Gastrocnemius medialis (tissue), 4 donors: ENCODE measurements at regions of chr11 and their contacts with region 1.

Region 1: DNA sequence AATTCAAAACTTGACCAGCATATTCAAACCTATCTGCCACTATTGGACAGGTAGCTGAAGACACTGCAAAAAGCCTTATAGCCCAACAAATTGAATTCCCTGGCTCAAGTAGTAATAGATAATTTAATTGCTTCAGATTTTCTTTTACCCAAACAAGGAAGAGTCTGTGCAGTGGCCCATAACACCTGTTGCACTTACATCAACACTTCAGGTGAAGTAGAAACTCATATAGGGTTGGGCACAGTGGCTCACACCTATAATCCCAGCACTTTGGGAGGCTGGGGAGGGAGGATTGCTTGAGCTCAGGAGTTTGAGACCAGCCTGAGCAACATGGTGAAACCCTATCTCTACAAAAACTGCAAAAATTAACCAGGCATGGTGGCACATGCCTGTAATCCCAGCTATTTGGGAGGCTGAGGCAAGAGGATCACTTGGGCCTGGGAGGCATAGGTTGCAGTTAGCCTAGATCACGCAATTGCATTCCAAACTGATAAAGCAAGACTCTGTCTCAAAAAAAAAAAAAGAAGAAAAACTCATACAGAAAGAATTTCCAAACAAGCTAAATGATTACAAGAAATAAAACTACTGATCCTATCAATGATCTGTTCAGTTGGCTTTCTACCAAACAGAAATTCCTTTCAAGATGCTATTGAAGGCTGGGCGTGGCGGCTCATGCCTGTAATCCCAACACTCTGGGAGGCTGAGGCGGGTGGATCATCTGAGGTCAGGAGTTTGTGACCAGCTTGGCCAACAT is 9.5 kb downstream of the FOLR3 start:
- DNase-seq: no peak
- ATAC-seq: no peak
- H3K4me3 ChIP-seq: no peak overlapping the region
- H3K27ac ChIP-seq: no peak overlapping the region
- H3K4me1 ChIP-seq: no peaks in the 10 kb centered on the region
- H3K27me3 ChIP-seq: no peaks in the 10 kb centered on the region
- CTCF ChIP-seq: no peak
- POLR2A ChIP-seq: no peak

Region 2: DNA sequence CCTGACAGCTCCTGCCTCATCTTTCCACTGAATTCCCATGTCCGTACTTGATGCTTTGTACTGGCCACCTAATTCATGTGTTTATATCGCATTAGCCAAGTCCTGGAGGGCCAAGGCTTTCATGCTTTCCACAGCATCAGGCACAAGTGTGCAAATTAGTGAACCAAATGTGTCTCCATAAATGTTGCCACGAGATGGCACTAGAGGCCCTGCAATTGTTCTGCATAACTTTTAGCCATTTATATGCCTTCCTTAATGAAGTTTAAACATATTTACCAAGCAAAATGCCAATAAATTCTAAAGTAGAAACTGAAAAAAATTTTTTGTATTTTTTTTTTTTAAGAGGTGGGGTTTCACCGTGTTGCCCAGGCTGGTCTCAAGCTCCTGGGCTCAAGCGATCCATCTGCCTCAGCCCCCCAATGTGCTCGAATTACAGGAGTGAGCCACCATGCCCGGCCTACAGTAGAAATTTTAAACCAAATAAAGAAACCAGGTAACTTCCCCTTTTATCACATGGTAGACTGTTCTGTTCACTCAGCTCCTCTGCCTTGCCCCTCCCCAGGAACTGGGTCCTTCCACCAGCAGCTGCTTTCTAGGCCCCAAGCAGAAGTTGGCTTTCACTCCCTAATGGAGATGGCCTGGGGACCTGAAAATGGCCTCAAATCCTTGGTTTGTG is 167.1 kb before region 1 on chr11:
- in situ Hi-C with region 1: no loop called
- intact Hi-C with region 1: loop called (anchors 2 kb)
- DNase-seq: peak in 1 of 2 donors; percentile 45
- ATAC-seq: peak; percentile 54 to 79
- H3K4me3 ChIP-seq: no peak overlapping the region
- H3K27ac ChIP-seq: no peak overlapping the region
- H3K4me1 ChIP-seq: peaks cover 3 to 8% of the 10 kb centered on the region in 2 donors
- H3K27me3 ChIP-seq: no peaks in the 10 kb centered on the region
- CTCF ChIP-seq: peak; percentile 39 to 75 (median 69)
- POLR2A ChIP-seq: no peak

Region 3: GRCh38 chr11:72030472-72031045 is 114.4 kb before region 1 on chr11:
- in situ Hi-C with region 1: no loop called
- intact Hi-C with region 1: loop called (anchors 1 kb)
- DNase-seq: no peak
- ATAC-seq: no peak
- H3K4me3 ChIP-seq: no peak overlapping the region
- H3K27ac ChIP-seq: peak overlapping the region in 1 of 4 donors; percentile 35
- H3K4me1 ChIP-seq: peaks cover 26 to 62% of the 10 kb centered on the region in 2 donors
- H3K27me3 ChIP-seq: no peaks in the 10 kb centered on the region
- CTCF ChIP-seq: no peak
- POLR2A ChIP-seq: no peak

Region 4: DNA sequence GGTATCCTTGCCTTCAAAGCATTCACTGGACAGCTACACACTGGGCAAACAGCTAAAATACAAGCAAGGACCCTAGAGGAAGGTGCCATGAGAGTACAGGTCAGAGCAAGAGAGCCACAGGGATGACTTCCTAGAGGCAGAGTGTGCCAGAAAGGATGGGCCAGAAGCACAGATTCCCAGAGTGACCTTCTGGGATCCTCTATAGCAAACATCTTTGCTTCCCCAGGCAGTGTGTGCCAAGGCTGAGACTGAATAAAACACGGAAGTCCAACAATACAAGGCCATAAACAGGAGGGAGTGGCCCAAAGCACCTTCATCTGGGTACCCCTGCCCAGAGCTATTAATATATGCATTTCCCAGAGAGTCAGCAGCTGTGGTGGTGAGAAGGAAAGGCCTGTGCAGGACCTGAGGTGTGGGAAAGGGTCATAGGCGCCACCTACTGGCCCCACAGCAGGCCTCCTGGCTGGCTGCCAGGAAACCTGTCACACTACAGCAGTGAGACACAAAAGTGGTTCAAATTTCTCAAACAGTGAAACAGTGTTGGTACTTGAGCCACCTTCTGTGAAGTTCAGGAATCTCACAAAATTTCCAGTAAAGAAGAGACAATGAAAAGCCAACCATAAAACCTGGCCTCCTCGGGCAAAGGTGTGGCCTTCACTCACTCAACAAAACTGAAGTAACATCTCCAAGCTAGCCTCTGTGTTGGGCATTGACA is 269.1 kb after region 1 on chr11:
- in situ Hi-C with region 1: no loop called
- intact Hi-C with region 1: no loop called
- DNase-seq: peak; percentile 70 to 77
- ATAC-seq: peak; percentile 82 to 93
- H3K4me3 ChIP-seq: no peak overlapping the region
- H3K27ac ChIP-seq: peak overlapping the region in 1 of 4 donors; percentile 45
- H3K4me1 ChIP-seq: peaks cover 11 to 17% of the 10 kb centered on the region in 2 donors
- H3K27me3 ChIP-seq: no peaks in the 10 kb centered on the region
- CTCF ChIP-seq: peak; percentile 79 to 90 (median 82)
- POLR2A ChIP-seq: no peak